ENCODE measurements at regions of chr4 and their contacts with region 1.

Region 1: DNA sequence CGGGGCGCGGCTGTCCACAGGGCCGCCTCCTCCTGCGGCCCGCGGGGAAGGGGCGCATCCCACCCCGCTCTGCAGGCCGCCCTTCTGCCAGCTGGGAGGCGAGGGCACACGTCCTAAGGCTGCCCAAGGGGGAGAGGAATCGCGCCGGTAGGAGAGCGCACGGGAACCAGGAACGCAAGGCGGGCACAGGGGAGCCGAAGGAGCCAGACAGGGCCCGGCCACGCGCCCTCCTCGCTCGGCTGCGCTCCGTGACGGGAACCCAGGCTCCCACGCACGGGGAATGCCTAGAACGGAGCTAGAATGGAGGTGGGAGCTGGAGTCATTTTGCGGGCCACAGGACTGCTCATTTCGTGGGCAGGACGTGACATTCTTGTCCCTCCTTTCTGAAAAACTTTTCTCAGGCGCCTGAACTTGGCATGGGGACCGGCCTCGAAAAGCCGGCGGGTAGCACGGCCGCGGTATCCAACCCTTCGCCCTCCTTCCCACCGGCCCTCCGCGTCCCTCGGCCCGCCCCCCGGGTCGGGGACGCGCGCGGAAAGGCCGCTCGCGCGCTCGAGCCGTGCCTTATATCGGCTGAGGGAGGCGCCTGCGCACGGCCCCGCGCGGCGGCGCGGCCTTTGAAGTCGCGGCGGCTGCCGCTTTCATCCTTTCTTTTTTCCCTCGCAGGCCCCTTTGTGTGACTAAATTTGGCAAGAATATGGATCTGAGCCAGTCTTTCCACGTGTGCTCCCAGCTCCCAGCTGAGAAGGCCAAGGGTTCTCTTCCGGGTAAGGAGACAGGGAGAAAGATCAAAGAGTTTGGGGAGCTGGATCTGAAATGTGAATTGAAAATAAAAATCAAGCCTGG is 4.2 kb upstream of the LEF1 start:
- ATAC-seq: peak; percentile 36 to 80 (median 76)
- H3K4me3 ChIP-seq: peak overlapping the region; percentile 32 to 43 (median 40)
- H3K27ac ChIP-seq: no peak overlapping the region
- H3K4me1 ChIP-seq: peaks cover 0 to 2% of the 10 kb centered on the region in 2 donors

Region 2: DNA sequence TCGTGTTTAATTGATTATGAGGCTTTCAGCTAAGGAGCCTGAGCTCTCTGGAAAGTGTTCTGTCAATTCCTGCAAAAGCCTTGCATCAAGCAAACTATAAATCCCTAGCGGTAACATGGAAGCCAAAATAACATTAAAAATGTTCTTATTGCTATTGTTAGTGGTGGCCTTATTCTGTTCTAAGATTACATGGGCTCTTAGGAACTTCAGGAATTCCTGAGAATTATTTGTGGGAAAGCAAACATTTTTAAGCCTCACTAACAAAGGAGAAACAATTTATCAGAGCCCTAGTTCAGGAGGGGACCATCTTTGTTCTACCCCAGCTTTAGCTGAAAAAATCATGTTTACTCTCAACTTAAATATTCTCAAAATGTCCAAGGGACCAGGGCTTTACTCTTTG is 572.5 kb before region 1 on chr4:
- in situ Hi-C with region 1: no loop called
- ATAC-seq: peak in 3 of 8 experiments; percentile 8 to 69 (median 32)
- H3K4me3 ChIP-seq: no peak overlapping the region
- H3K27ac ChIP-seq: no peak overlapping the region
- H3K4me1 ChIP-seq: no peaks in the 10 kb centered on the region

Region 3: DNA sequence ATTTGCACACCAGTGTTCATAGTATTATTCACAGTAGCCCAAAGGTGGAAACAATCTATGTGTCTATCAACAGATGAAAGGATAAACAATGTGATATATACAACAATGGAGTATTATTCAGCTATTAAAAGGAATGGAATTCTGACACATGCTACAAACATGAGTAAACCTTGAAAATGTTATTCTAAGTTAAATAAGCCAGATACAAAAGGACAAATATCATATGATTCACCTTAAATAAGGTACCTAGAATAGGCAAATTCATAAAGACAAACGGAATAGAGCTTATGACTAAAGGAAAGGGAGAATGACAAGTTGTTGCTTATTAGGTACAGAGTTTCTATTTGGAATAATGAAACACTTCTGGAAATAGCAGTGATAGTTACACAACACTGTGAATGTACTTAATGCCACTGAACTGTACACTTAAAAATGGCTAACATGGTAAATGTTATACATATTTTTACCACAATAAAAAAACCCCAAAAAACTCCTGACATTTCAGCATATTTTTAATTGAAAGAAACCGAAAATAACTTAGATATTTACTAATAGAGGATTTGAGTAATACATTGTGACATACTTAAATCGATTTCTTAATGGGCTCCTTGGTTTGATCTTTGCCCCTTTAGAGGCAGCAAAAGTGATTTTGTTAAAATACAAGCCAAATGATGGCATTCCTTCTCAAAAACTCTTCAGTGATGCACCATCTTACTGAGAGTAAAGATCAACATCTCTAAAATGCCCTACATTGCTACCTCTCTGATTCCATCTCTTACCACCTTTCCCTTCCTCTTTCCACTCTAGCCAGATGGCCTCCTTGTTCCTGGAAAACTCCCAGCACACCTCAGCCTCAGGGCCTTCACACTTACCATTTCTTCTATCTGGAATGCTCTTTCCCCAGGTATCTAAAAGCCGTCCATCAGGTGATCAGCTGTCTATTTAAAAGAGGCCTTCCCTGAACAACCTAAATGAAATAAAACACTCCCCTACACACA is 250.2 kb before region 1 on chr4:
- in situ Hi-C with region 1: no loop called
- ATAC-seq: no peak
- H3K4me3 ChIP-seq: no peak overlapping the region
- H3K27ac ChIP-seq: no peak overlapping the region
- H3K4me1 ChIP-seq: no peaks in the 10 kb centered on the region

Region 4: DNA sequence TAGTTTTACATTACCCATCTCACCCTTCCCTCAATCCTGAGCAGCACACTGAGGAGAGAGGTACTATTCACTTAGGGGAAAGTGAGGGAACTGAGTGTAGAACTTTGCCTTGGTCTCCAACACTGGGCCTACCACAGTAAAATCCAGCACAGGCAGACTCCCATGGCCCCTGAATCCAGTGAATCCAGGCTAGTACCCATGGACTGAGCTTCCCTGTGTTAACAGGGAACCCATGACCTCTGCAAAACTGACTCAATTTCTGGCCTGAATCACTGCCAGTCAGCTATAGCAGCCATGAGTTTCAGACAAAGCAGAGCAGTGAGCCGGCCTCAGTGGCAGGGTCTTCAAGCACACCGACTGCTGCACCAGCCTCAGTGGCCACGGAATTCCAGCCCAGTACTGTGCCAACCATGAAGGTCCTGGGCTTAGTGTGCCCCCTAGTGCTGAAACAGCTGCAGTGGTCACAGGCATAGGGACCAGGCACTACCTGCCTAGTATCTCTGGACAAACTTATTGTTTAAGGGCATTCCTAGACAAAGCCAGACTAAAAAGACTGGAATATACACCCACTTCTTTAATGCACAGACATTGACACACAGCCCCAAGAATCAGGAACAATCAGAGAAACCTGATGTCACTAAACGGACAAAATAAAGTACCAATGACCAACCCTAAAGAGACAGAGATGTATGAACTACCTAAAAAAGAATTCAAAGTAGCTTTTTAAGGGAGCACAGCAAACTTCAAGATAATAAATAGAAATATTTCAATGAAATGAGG is 320.0 kb after region 1 on chr4:
- in situ Hi-C with region 1: loop called in 1 of 9 experiments (anchors 25 kb)
- ATAC-seq: peak in 3 of 8 experiments; percentile 87 to 100 (median 91)
- H3K4me3 ChIP-seq: no peak overlapping the region
- H3K27ac ChIP-seq: no peak overlapping the region
- H3K4me1 ChIP-seq: no peaks in the 10 kb centered on the region

Measured in motor neuron (in vitro differentiated cells).